H1 (cell line): ENCODE measurements at regions of chr1 and their contacts with region 1.

Region 1: DNA sequence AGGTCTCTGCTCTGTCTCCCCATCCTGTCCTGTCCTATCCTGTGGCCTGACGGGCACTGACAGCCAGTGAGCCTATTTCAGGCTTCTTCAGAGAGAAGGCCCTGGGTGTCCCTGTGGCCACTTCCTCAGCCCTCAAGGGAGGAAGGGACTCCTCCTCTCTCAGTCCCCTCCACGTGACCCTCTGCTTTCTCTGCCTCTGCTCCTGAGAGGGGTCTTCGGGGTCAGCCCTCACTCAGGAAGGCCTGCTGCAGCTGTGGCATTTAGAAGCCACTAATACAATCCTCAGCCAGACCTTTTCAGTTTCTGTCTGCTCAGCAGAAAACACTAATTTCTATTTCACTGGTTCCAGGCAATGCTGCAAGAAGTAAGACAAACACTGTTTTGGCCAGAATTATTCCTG is 43.6 kb upstream of the ETV3 start:
- DNase-seq: no peak
- H3K4me3 ChIP-seq: no peak overlapping the region
- H3K27ac ChIP-seq: no peak overlapping the region
- H3K4me1 ChIP-seq: peaks cover 0 to 3% (median 2%) of the 10 kb centered on the region in 4 experiments; a peak in 2 of 7 replicates
- H3K27me3 ChIP-seq: 0 out of 7 replicates have a peak, but pooled peaks cover 0 to 3% (median 0%) of the 10 kb centered on the region in 4 experiments
- CTCF ChIP-seq: no peak
- EP300 ChIP-seq: no peak
- POLR2A ChIP-seq: no peak
- RAD21 ChIP-seq: no peak

Region 2: DNA sequence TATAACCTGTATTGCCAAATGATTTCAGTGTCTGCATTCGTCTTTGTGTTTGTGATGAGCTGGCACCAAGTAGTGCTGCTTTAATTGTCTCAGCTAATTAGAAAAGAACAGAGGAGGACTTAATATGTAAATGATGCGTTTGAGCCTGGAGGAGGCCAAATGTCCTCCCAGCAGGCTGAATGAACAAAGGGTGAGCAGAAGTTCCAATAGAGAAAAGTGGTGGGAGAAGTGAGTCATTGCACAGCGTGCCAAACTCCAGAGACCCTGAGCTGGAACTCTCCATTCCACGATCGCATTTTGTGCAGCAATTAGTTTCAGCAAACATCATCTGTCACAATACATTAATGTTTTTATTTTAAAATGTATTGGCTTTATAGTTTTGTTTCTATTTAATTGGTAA is 100.1 kb before region 1 on chr1:
- CTCF ChIA-PET with region 1: no interaction called
- POLR2A ChIA-PET with region 1: no interaction called
- DNase-seq: no peak
- H3K4me3 ChIP-seq: no peak overlapping the region
- H3K27ac ChIP-seq: no peak overlapping the region
- H3K4me1 ChIP-seq: peaks cover 2 to 5% (median 3%) of the 10 kb centered on the region in 4 experiments; a peak in 4 of 7 replicates
- H3K27me3 ChIP-seq: no peaks in the 10 kb centered on the region
- CTCF ChIP-seq: no peak
- EP300 ChIP-seq: no peak
- POLR2A ChIP-seq: no peak
- RAD21 ChIP-seq: no peak

Region 3: GRCh38 chr1:157137408-157138219 is 44.2 kb before region 1 on chr1:
- CTCF ChIA-PET with region 1: no interaction called
- POLR2A ChIA-PET with region 1: no interaction called
- DNase-seq: peak in 1 of 2 experiments; percentile 56
- H3K4me3 ChIP-seq: peak overlapping the region; percentile 68 to 99 (median 94)
- H3K27ac ChIP-seq: peak overlapping the region; percentile 87; the same call in 1 of the 2 replicates
- H3K4me1 ChIP-seq: peaks cover 2 to 17% (median 7%) of the 10 kb centered on the region in 4 experiments; a peak in 4 of 7 replicates
- H3K27me3 ChIP-seq: no peaks in the 10 kb centered on the region
- CTCF ChIP-seq: no peak
- EP300 ChIP-seq: no peak
- POLR2A ChIP-seq: no peak
- RAD21 ChIP-seq: no peak

Region 4: GRCh38 chr1:157170677-157171515 is 10.9 kb before region 1 on chr1:
- CTCF ChIA-PET with region 1: interaction called, 12 read pairs
- POLR2A ChIA-PET with region 1: no interaction called
- DNase-seq: peak in 1 of 2 experiments; percentile 91
- H3K4me3 ChIP-seq: no peak overlapping the region
- H3K27ac ChIP-seq: no peak overlapping the region
- H3K4me1 ChIP-seq: no peaks in the 10 kb centered on the region
- H3K27me3 ChIP-seq: no peaks in the 10 kb centered on the region
- CTCF ChIP-seq: peak; percentile 53 to 77 (median 61)
- EP300 ChIP-seq: no peak
- POLR2A ChIP-seq: no peak
- RAD21 ChIP-seq: peak; percentile 23 to 54; a peak in 2 of 4 replicates